ENCODE measurements at regions of chr17 and their contacts with region 1.

Region 1: DNA sequence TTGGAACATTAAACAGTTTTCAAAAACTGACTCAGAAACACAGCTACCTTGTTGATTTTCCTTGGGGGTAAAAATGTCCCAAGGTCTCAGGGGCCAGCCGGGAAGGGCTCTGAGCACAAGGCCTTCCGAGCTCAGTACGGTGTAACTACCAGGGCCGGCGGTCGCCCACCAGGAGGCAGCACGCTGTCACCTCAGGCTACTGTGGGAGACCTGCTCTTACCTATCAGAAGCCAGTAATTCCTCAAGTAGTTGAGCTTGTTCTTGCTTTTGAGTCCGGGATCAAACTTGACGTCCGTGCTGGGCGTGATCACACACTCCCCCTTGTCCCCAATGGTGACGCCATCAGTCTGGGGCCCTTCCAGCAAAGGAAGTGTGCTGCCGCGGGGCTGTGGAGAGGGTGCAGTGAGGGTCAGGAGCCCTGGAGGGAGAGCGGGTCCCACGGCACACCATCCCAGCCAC is 43.4 kb upstream of the ICAM2 start:
- DNase-seq: peak; percentile 36 to 81 (median 58)
- ATAC-seq: peak; percentile 53
- H3K4me3 ChIP-seq: peak overlapping the region; percentile 47
- H3K4me3 Mint-ChIP-seq: peak overlapping the region; percentile 82
- H3K27ac ChIP-seq: no peak overlapping the region
- H3K27ac Mint-ChIP-seq: peak overlapping the region; percentile 80
- H3K4me1 ChIP-seq: peaks cover 91% of the 10 kb centered on the region
- H3K4me1 Mint-ChIP-seq: peaks cover 85% of the 10 kb centered on the region
- H3K27me3 ChIP-seq: no peaks in the 10 kb centered on the region
- H3K27me3 Mint-ChIP-seq: no peaks in the 10 kb centered on the region
- CTCF ChIP-seq: peak; percentile 60

Region 2: DNA sequence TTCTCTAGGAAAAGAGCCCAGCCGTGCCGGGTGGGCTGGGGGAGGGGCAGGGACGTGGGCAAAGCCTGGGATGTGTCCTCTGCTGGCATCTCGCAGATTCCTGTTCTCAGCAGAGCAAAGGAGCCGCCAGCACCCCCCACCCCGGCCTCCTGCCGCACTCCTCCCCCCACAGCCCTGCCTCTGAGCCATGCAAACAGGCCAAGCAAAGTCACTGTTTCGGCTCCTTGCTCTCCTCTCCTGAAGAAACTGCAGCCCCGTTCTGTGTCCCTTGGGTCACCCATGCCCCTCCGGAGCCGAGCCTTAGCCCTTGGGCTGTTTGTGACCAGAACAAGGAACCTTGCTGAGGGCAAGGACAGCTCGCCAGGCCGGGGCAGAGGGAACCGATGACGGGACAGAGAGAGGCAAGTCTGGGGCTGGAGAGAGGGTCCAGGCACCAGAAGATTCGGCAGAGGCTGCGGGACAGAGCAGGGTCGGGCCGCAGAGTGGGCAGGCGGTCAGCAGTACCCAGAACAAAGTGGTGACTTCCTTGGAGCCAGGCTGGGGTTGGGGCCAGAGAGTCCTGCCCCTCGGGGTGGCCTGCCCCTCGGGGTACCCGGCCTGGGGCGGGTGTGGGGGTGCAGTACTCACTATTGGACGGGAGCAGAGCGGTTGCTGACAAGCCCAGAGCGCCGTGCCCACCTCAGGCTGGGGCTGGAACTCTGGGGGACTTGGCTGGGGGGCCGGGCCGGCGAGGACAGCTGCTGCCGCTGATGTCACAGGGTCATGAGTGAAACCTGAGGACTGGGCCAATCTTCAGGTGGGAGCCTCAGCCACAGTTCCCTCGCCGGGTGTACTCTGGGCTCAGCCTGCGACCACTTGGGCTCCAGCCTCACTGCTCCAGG is 74.8 kb before region 1 on chr17:
- CTCF ChIA-PET with region 1: no interaction called
- POLR2A ChIA-PET with region 1: no interaction called
- intact Hi-C with region 1: no loop called
- DNase-seq: no peak
- ATAC-seq: no peak
- H3K4me3 ChIP-seq: no peak overlapping the region
- H3K4me3 Mint-ChIP-seq: no peak overlapping the region
- H3K27ac ChIP-seq: no peak overlapping the region
- H3K27ac Mint-ChIP-seq: no peak overlapping the region
- H3K4me1 ChIP-seq: peaks cover 60% of the 10 kb centered on the region
- H3K4me1 Mint-ChIP-seq: peaks cover 61% of the 10 kb centered on the region
- H3K27me3 ChIP-seq: no peaks in the 10 kb centered on the region
- H3K27me3 Mint-ChIP-seq: no peaks in the 10 kb centered on the region
- CTCF ChIP-seq: no peak

Region 3: DNA sequence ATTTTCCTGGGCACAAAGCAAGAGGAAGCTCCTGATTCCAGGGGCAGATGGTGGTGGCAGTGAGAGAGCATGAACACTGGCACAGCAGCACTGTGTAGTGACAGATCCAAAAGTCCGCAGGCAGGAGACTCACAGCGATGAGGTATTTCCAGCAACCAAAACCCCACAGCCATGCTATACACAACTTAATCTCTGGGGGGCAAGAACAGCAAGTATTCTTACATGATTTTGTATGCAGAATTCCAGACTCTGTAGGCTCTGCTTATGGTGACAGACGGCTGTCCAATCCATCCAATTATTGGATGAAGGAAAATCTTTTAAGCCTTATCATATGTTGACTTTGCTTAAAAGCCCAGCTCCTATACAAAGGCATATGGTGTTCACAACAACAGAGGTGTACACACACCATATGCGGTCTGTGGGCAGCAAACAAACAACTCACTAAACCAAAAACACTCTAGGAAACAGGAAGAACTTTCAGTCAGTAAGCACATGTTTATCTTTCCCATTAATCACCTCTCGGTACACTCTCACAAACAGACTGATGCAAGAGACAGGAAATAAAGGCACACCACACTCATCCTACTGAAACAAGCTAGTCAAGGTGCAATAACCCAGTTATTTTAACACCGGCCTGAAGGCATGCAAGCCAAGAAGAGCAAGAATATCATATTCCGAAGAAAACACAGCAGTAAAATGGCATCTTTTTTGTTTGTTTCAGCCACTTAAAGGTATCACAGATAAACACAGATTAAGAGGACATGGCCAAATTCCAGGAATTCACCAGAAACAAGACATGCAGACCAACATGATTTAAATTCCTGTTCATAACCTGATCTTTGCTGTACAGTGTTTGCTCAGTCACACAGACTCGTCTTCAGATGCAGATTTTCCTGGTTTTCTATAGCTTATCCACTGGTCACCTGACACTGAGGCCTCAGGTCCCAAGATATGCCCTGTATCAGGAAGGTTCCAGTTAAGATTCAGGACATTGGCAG is 18.3 kb after region 1 on chr17:
- CTCF ChIA-PET with region 1: interaction called, 5 read pairs
- POLR2A ChIA-PET with region 1: interaction called, 23 read pairs
- intact Hi-C with region 1: loop called in 1 of 2 experiments (anchors 2 kb)
- DNase-seq: peak in 8 of 14 experiments; percentile 12 to 84 (median 30)
- ATAC-seq: peak; percentile 83
- H3K4me3 ChIP-seq: peak overlapping the region; percentile 11
- H3K4me3 Mint-ChIP-seq: peak overlapping the region; percentile 50
- H3K27ac ChIP-seq: peak overlapping the region in 1 of 2 donors; percentile 67
- H3K27ac Mint-ChIP-seq: no peak overlapping the region
- H3K4me1 ChIP-seq: peaks cover 64% of the 10 kb centered on the region
- H3K4me1 Mint-ChIP-seq: peaks cover 27% of the 10 kb centered on the region
- H3K27me3 ChIP-seq: no peaks in the 10 kb centered on the region
- H3K27me3 Mint-ChIP-seq: no peaks in the 10 kb centered on the region
- CTCF ChIP-seq: peak; percentile 28

Region 4: DNA sequence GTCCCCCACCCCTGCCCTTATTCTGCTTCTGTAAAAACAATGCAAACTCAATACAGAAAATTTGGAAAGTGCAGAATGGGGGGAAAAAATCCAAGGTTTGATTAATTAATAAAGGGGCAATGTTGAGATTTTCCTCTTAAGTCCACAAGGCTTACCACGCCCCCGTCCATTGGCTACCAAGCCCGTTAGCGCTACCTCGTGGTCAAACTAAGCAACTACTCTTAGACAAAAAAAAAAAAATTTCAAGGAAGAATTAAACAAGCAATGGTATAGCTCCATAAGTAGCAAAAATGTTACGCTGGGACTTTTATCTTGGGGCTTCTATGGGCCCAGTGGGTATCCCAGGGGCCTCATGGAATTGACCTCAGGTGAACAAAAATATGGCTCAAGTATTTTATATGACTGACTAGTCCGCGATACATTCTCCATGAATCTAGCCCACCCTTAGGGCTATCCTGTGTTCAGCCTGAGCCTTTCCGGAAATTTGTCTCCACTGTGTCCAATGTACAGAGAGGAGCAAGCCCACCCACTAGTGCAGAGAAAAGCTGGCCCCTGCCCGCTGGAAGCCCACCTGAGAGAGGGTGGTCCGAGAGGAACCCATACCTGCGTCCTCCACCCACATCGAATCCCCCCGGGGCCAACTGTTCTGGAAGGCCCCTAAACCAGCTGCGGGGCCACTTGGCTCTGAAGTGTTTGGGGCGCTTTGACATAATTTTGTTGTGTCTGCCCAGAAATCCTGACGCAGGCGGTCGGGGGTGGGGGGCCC is 218.3 kb after region 1 on chr17:
- CTCF ChIA-PET with region 1: no interaction called
- POLR2A ChIA-PET with region 1: no interaction called
- intact Hi-C with region 1: loop called in 1 of 2 experiments (anchors 5 kb)
- DNase-seq: peak; percentile 9 to 83 (median 40)
- ATAC-seq: peak; percentile 74
- H3K4me3 ChIP-seq: no peak overlapping the region
- H3K4me3 Mint-ChIP-seq: no peak overlapping the region
- H3K27ac ChIP-seq: no peak overlapping the region
- H3K27ac Mint-ChIP-seq: no peak overlapping the region
- H3K4me1 ChIP-seq: peaks cover 3% of the 10 kb centered on the region
- H3K4me1 Mint-ChIP-seq: no peaks in the 10 kb centered on the region
- H3K27me3 ChIP-seq: no peaks in the 10 kb centered on the region
- H3K27me3 Mint-ChIP-seq: no peaks in the 10 kb centered on the region
- CTCF ChIP-seq: peak; percentile 63

Measured in CD4-positive, alpha-beta T cell (primary cell).